Activated naive CD8-positive, alpha-beta T cell treated with anti-CD3 and anti-CD28 coated beads, Interleukin-2, amount 10 ng/mL, durations not matched to agents 7 days and 5 days (primary cell): ENCODE measurements at regions of chr6 and their contacts with region 1.

Region 1: DNA sequence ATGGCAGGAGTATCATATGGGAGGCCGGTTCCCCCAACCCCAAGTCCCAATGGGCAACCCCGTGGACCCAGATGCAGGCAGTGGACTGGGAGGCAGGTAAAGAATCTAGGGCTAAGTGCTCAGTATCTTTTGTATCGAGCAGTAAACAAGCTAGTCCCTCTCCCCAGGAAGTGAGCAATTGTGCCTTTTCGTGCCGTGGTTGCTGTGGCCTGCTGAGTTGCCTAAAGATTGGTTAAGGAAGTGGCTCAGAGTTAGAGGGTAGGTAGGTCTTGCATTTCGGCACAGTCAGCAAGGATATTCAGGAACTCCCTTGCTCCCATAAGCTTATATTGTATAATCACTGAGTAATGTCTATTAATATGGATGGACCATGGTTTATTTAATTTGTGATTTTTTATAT is 1.3 kb upstream of the DNAH8 start:
- DNase-seq: peak; percentile 81
- ATAC-seq: peak; percentile 94
- H3K4me3 Mint-ChIP-seq: peak overlapping the region; percentile 70
- H3K27ac Mint-ChIP-seq: peak overlapping the region; percentile 93
- H3K4me1 Mint-ChIP-seq: peaks cover 43% of the 10 kb centered on the region
- H3K27me3 Mint-ChIP-seq: peaks cover 18% of the 10 kb centered on the region

Region 2: DNA sequence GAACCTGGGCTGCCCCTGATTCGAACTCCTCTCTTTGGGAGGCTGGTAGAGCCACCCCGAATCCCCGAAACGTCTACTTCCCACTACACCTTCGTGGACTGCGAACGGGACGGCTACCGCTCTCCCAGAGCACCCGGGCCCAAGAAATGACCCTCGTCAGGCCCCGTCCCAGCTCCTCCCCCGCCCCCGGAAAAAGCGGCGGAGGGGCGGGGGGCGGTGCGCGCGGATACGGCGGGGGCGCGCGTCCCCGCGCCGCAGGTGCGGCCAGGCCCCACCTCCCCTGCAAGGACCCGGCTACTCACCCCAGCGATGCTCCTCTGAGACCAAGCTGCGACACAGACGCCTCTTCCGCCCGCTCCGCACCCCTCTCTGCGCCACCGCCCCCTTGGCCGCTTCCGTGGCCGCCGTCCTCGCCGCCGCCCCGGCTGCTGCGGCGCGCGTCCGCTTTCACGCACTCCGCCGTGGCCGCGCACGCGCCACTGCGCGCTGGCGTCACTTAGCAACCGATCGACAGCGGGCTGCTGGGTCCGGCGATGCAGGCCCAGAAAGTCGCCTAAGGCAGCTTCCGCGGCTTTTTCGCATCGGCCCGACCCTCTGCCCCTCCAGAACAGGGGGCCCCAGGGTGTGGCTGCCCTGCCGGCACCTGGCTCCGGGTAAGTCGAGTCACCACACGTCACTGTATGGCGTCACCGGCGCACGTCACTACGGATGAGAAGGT is 74.2 kb before region 1 on chr6 and contains the start of gene BTBD9:
- POLR2A ChIA-PET with region 1: interaction called, 15 read pairs
- DNase-seq: peak; percentile 92
- ATAC-seq: peak; percentile 84
- H3K4me3 Mint-ChIP-seq: peak within 1 kb of the TSS; percentile 91
- H3K27ac Mint-ChIP-seq: peak within 1 kb of the TSS; percentile 94
- H3K4me1 Mint-ChIP-seq: peaks cover 29% of the 10 kb centered on the region
- H3K27me3 Mint-ChIP-seq: no peaks in the 10 kb centered on the region
- total RNA-seq, gene BTBD9: 19.1 to 19.8 TPM

Region 3: DNA sequence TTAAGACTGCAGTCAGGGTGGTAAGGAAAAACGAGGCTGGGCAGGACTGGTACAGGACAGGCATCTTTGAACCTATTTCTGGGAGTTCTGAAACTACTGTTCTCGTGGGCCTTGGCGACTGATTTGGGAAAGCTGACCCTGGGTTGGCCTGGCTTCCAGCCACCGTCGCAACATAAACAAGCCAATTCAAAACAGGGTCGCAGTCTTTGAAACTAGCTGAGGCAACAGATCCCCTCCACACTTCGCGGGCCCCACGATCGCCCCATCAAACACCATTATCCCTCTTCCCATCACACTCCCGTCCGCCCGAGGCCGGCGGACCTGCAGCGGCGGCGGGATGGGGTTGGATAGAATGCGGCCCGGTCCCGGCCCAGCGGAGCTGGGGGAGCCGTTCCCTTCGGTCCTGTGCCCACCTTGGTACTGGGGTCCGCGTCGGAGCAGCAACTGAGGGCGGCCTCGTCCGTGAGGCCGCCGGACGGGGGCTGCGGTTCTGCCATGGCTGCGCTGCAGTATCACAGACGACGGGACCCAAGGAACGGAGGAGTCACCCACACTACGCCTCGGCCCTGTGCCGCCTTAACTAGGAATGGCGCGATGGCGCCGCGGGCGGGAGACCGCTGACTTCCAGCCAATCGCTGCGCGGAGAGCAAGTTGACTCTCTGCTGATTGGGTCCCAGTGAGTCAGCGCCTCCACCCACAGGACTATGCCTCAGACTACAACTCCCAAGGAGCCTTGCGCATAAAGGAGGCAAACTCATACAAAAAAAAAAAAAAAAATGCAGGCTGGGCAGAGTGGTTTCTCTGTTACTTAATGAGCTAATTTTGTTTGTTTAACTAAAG is 11.0 kb before region 1 on chr6 and contains the start of gene GLO1:
- POLR2A ChIA-PET with region 1: interaction called, 53 read pairs
- DNase-seq: peak; percentile 92
- ATAC-seq: peak; percentile 100
- H3K4me3 Mint-ChIP-seq: peak within 1 kb of the TSS; percentile 97
- H3K27ac Mint-ChIP-seq: peak within 1 kb of the TSS; percentile 92
- H3K4me1 Mint-ChIP-seq: peaks cover 37% of the 10 kb centered on the region
- H3K27me3 Mint-ChIP-seq: peaks cover 20% of the 10 kb centered on the region
- total RNA-seq, gene GLO1: 88.8 to 90.7 TPM

Region 4: DNA sequence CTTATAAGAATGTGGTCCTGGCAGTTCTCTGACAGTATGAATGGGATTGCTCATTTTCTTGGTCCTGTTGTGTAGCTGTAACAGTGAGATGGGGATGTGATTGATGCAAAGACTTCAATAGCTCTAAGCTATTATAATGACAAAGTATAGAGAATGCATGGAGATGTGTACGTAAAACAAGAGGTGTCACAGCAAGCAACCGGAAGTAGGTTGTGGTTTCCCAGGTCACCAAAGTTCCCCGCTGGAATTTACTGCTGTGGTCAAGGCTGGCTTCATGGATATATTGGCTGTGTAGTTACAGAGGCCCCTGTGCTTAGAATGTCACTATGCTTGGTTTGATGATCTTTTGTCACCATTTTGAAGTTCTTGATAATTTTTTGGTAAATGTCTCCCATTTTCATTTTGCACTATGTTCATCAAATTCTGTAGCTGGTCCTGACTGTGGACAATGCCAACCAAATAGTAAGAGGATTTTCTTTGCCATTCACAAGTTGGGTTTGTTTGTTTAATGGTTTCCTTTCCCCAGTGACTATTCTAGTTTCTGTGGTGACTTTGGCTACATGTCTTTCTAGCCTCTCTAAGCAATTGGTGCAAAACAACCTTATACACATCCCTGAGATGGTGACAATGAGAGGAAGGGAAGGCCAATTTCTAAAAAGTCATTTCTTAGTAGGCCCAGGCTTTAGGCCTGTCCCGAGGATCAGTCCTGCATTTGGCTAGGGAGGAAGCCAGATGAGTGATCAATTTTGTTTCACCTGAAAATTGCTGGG is 11.8 kb after region 1 on chr6:
- POLR2A ChIA-PET with region 1: interaction called, 11 read pairs
- DNase-seq: no peak
- ATAC-seq: peak; percentile 82
- H3K4me3 Mint-ChIP-seq: peak overlapping the region; percentile 17
- H3K27ac Mint-ChIP-seq: peak overlapping the region; percentile 67
- H3K4me1 Mint-ChIP-seq: peaks cover 20% of the 10 kb centered on the region
- H3K27me3 Mint-ChIP-seq: peaks cover 9% of the 10 kb centered on the region